Transverse colon (tissue), 4 donors: ENCODE measurements at regions of chr18 and their contacts with region 1.

Region 1: GRCh38 chr18:23401400-23402347 is 51.4 kb upstream of the RIOK3 start:
- DNase-seq: peak; percentile 47
- H3K4me3 ChIP-seq: no peak overlapping the region
- H3K27ac ChIP-seq: no peak overlapping the region
- H3K4me1 ChIP-seq: peaks cover 0 to 9% (median 4%) of the 10 kb centered on the region in 4 donors
- H3K27me3 ChIP-seq: no peaks in the 10 kb centered on the region
- CTCF ChIP-seq: no peak
- EP300 ChIP-seq: no peak
- POLR2A ChIP-seq: no peak

Region 2: DNA sequence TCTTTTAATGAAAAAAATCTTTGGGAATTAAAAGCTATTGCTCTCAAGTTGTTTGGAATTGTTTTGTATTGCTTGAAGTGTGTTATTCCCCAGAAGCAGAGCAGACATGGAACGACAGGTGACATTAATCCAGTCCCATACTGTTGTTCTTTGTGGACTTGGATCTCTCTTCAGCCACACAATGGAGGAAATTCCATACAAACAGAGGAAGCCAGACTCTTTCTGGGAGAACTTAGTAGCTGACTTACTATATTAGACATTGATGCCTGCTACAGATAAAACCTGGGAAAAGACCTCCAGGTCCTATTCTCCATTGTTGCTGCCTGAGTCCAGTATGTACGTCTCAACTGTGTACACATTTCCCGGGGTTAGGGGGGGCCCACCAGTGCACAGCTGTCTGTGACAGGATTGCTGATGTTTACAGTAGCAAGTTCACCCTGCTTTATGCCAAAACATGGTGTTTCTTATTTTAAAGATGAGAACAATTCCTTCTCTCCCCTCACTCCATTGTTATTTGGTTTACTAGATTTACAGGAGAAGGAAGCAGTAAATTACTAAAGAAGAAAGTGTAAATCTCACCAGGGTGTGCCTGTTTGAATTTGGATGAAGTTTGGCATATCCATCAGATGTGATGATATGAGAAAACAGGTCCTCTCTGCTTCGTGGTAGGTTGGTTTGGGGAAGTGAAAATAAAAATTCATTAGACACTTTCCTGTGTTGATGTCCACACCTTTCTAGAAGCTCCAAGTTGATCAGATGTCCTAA is 610.9 kb before region 1 on chr18:
- in situ Hi-C with region 1: loop called in 3 of 4 experiments (anchors 25 kb)
- intact Hi-C with region 1: loop called (anchors 10 kb)
- DNase-seq: no peak
- H3K4me3 ChIP-seq: no peak overlapping the region
- H3K27ac ChIP-seq: no peak overlapping the region
- H3K4me1 ChIP-seq: no peaks in the 10 kb centered on the region
- H3K27me3 ChIP-seq: no peaks in the 10 kb centered on the region
- CTCF ChIP-seq: no peak
- EP300 ChIP-seq: no peak
- POLR2A ChIP-seq: no peak

Region 3: GRCh38 chr18:23032030-23032582 is 369.6 kb before region 1 on chr18:
- in situ Hi-C with region 1: no loop called
- intact Hi-C with region 1: loop called (anchors 10 kb)
- DNase-seq: no peak
- H3K4me3 ChIP-seq: no peak overlapping the region
- H3K27ac ChIP-seq: no peak overlapping the region
- H3K4me1 ChIP-seq: peaks cover 0 to 12% (median 2%) of the 10 kb centered on the region in 4 donors
- H3K27me3 ChIP-seq: no peaks in the 10 kb centered on the region
- CTCF ChIP-seq: no peak
- EP300 ChIP-seq: no peak
- POLR2A ChIP-seq: no peak

Region 4: DNA sequence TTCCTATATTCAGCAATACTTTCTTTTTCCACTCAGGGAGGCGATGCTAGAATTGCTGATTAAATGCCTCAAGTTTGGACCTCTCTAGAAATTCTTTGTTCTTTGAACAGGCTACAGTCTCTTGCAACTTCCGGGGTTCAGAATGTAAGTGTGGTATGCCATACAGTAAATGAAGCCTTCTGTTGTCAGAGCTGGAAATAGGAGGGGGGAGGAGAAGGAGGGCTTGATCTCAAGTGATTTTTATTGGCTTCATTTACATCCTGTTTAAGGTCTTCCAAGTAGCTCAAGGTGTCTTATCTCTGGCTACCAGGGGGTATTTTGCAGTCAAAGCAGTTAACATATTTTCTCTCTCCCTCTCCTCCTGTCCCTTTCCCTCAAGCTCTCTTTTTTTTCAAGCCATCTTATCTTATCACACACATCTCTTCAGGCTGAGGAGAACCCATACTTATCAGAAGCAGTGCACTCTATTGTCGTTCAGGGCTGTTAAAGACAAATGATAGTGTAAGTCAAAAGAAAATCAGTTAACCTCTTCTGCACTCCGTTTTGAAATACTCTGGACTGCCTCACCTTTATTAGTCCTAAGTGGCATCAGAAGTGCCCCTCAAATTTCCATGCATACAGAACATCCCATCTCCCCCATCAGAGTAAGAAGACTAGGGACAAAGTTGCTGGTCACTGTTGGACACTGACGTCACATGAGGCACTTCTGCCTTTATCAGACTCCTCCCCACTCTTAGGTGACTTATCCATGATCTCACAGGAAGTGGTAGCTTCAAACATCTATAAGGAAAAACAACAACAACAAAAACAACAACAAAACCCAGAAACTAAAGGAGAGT is 1838.1 kb after region 1 on chr18:
- in situ Hi-C with region 1: no loop called
- intact Hi-C with region 1: loop called (anchors 5 kb)
- DNase-seq: no peak
- H3K4me3 ChIP-seq: no peak overlapping the region
- H3K27ac ChIP-seq: peak overlapping the region in 1 of 4 donors; percentile 18
- H3K4me1 ChIP-seq: no peaks in the 10 kb centered on the region
- H3K27me3 ChIP-seq: no peaks in the 10 kb centered on the region
- CTCF ChIP-seq: no peak
- EP300 ChIP-seq: no peak
- POLR2A ChIP-seq: no peak